ENCODE measurements at regions of chr12 and their contacts with region 1.

Region 1: DNA sequence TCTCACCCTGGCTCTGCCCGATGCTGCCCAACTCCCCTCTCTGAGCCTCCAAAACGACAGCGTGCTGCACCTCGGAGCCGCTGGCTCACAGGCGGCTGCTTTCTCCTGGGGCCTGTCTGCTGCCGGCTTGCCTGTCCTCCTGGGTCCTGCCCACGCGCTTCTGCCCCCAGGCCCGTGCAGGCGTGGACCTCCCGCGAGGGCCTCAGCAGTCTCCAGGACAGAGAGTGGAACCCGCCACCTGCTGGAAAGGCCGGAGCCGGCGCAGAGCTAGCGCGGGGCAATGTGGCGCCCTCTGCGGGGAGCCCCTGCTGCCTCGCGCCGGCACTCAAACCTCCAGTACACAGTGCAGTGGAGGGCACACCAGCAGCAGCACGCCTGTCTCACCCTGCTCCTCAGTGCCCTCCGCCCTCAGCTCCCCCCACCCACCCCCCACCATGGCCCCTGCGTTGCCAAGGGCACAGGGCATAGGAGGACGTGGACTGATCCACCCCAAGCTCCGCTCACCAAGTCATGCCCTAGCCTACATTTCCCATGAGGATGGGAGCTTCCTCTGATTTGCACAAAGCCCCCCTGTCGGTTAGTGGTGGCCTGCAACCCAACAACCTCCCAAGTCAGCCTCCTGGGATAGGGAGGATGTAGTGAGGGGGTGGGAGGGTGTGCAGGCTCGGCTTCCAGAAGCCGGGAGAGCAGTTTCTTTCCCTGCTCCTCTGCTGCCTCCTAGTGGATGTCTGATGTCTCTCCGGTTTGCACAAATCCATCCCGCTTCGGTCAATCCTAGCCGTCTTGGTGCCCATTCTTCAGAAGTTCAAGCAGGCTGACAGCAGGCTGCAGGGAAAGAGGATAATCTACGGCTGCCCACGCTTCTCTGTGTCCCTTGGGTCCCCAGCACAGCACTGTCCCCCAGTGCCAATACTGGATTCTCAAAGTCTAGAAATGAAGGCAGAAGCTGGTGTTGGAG is 25.2 kb downstream of the KRT8 start:
- DNase-seq: peak; percentile 83
- ATAC-seq: peak; percentile 90
- H3K4me3 ChIP-seq: peak overlapping the region; percentile 49 to 71 (median 51)
- H3K27ac ChIP-seq: no peak overlapping the region
- H3K4me1 ChIP-seq: peaks cover 56% of the 10 kb centered on the region
- H3K27me3 ChIP-seq: peaks cover 1 to 8% of the 10 kb centered on the region in 2 experiments; a peak in 2 of 5 replicates
- CTCF ChIP-seq: peak; percentile 92
- EP300 ChIP-seq: no peak
- POLR2A ChIP-seq: no peak
- RAD21 ChIP-seq: peak; percentile 77

Region 2: GRCh38 chr12:52147367-52147972 is 732.2 kb before region 1 on chr12:
- CTCF ChIA-PET with region 1: no interaction called
- POLR2A ChIA-PET with region 1: no interaction called
- in situ Hi-C with region 1: loop called (anchors 5 kb)
- intact Hi-C with region 1: no loop called
- DNase-seq: peak; percentile 67
- ATAC-seq: peak; percentile 75
- H3K4me3 ChIP-seq: peak overlapping the region in 1 of 3 experiments; percentile 10; a peak in 1 of 6 replicates
- H3K27ac ChIP-seq: no peak overlapping the region
- H3K4me1 ChIP-seq: peaks cover 7% of the 10 kb centered on the region; the same call in 1 of the 2 replicates
- H3K27me3 ChIP-seq: peaks cover 1 to 9% of the 10 kb centered on the region in 2 experiments; a peak in 2 of 5 replicates
- CTCF ChIP-seq: no peak
- EP300 ChIP-seq: 0 out of 4 replicates have a peak, but pooled peaks of 1 of the 2 experiments have one; percentile 8
- POLR2A ChIP-seq: no peak
- RAD21 ChIP-seq: no peak

Region 3: DNA sequence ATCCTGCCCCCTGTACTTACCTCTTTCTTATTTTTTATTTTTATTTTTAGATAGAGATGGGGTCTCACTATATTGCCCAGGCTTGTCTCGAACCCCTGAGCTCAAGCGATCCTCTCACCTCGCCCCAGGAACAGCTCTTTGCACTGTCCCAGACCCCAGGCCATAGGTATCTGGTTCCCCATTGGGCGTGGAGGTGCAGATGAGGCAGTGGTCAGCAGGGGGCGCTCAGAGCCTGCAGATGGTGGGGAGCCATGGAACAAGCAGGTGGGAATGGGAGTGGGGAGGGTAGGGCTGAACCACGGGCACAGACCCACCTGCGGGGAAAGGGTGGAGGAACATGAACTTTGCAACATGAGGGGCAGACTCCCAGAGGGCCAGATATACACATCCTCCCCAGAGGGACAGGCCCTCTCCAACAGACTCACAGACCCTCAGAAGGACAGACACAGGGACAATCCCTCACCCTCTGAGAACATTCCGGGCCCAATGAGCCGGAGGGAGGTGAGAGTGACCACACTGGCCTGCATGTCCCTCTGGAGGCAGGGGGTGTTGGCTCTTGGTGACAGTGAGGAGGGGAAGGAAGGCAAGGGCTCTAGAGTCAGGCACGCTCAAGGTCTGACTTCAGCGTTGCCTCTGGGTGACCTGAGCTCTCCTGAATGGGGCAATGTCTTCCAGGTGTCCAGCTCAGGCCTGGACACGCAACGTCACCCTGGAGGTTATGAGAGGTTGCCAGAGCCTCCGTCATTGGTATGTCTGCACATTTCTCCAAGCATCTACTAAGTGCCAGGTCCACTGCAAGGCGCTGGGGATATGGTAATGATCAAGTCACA is 722.7 kb before region 1 on chr12:
- CTCF ChIA-PET with region 1: interaction called, 16 read pairs
- POLR2A ChIA-PET with region 1: no interaction called
- in situ Hi-C with region 1: no loop called
- intact Hi-C with region 1: loop called (anchors 1 kb)
- DNase-seq: peak; percentile 41
- ATAC-seq: peak; percentile 89
- H3K4me3 ChIP-seq: no peak overlapping the region
- H3K27ac ChIP-seq: no peak overlapping the region
- H3K4me1 ChIP-seq: no peaks in the 10 kb centered on the region
- H3K27me3 ChIP-seq: no peaks in the 10 kb centered on the region
- CTCF ChIP-seq: peak; percentile 97
- EP300 ChIP-seq: no peak
- POLR2A ChIP-seq: no peak
- RAD21 ChIP-seq: peak; percentile 88

Region 4: DNA sequence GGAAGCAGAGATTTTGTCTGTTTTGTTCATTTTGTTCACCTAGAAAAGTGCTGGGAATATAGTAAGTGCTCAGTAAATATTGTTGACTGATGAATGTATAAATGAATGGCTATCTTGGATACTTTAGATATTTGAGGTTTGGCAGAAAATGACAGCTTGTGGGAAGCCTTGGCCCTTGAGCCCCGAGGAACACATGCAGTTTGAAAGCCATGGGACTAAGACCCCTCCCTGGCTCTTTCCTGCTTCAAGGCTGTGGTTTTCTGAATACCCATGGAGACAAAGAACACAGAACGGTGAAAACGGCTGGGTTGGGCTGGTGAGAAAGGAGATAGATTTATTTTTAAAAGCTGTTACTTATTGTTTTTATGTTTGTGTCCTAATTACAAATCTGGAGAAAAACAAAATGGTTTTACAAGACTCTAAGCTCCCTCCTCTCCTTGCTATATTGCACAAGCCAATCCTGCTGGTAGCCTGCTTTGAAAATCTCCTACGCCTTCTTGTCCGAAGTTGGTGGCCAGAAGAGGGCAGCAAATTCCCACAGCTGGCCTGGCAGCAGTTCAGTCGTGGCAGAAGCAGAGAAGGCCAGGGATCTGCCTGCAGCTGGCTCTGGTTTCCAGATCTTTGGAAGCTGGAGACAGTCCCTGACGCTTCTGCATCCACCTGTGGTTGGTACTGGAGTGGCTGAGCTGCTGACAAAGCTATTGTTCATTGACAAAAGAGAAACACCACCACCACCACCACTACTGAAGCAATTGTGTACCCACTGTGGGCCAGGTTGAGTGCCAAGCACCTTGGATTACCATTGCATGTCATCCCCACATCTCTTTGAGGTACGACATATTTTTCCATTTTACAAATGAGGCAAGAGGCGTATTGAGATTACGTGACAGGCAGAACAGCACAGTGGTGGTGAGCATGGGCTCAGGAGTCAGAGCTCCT is 507.2 kb before region 1 on chr12:
- CTCF ChIA-PET with region 1: interaction called, 41 read pairs
- POLR2A ChIA-PET with region 1: no interaction called
- in situ Hi-C with region 1: no loop called
- intact Hi-C with region 1: loop called (anchors 5 kb)
- DNase-seq: peak; percentile 53
- ATAC-seq: peak; percentile 95
- H3K4me3 ChIP-seq: no peak overlapping the region
- H3K27ac ChIP-seq: no peak overlapping the region
- H3K4me1 ChIP-seq: no peaks in the 10 kb centered on the region
- H3K27me3 ChIP-seq: peaks cover 1 to 32% of the 10 kb centered on the region in 2 experiments; a peak in 3 of 5 replicates
- CTCF ChIP-seq: peak; percentile 91
- EP300 ChIP-seq: no peak
- POLR2A ChIP-seq: no peak
- RAD21 ChIP-seq: peak; percentile 69; the same call in 1 of the 2 replicates

Region 5: GRCh38 chr12:52391618-52392002 is 488.1 kb before region 1 on chr12:
- CTCF ChIA-PET with region 1: interaction called, 6 read pairs
- POLR2A ChIA-PET with region 1: no interaction called
- in situ Hi-C with region 1: loop called (anchors 5 kb)
- intact Hi-C with region 1: no loop called
- DNase-seq: no peak
- ATAC-seq: no peak
- H3K4me3 ChIP-seq: no peak overlapping the region
- H3K27ac ChIP-seq: no peak overlapping the region
- H3K4me1 ChIP-seq: no peaks in the 10 kb centered on the region
- H3K27me3 ChIP-seq: peaks cover 0 to 9% of the 10 kb centered on the region in 2 experiments; a peak in 3 of 5 replicates
- CTCF ChIP-seq: no peak
- EP300 ChIP-seq: no peak
- POLR2A ChIP-seq: no peak
- RAD21 ChIP-seq: no peak

Region 6: GRCh38 chr12:52582971-52583456 is 296.7 kb before region 1 on chr12:
- CTCF ChIA-PET with region 1: interaction called, 33 read pairs
- POLR2A ChIA-PET with region 1: no interaction called
- in situ Hi-C with region 1: no loop called
- intact Hi-C with region 1: loop called (anchors 1 kb)
- DNase-seq: peak; percentile 40
- ATAC-seq: peak; percentile 94
- H3K4me3 ChIP-seq: no peak overlapping the region
- H3K27ac ChIP-seq: no peak overlapping the region
- H3K4me1 ChIP-seq: no peaks in the 10 kb centered on the region
- H3K27me3 ChIP-seq: peaks cover 4 to 49% of the 10 kb centered on the region in 2 experiments; a peak in 2 of 5 replicates
- CTCF ChIP-seq: peak; percentile 82
- EP300 ChIP-seq: no peak
- POLR2A ChIP-seq: no peak
- RAD21 ChIP-seq: peak; percentile 71

Measured in HepG2 (cell line).